A673 (cell line): ENCODE measurements at regions of chr1 and their contacts with region 1.

Region 1: DNA sequence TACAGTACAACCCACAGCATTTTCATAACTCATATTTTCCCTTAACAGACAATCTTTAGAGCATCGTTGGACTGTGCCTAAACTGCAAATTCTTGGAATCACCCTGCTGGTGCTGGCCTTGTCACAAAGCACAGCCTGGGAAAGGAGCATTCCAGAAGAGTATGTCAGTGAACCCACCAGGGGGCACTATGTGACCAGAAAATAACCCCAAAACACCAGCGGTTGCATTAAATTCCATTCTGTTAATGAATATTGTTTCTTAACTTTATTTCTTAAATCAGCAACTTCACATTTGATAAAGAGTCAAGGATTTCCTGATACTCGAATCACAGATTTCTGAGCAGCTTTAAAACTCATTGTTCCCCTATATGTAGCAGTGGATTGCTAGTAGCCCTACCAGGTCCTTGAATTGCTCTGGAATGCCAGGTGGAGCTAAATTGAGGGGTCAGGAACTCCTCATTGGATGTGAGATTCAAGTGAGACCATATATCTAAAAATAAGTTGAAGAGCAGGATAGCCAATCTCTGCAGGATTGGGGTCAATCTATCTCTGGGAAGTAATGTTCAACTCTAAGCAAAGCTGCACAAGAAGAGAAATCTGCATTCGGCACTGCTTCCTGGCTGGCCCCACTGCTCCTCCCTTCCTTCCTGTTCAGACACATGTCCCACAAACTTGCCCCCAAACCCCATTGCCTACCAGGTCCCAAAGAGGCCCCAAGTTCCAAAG is 12.7 kb upstream of the RAB4A start:
- DNase-seq: peak; percentile 80
- H3K4me3 ChIP-seq: no peak overlapping the region
- H3K27ac ChIP-seq: no peak overlapping the region
- H3K4me1 ChIP-seq: peaks cover 7% of the 10 kb centered on the region
- H3K27me3 ChIP-seq: no peaks in the 10 kb centered on the region
- CTCF ChIP-seq: peak; percentile 84

Region 2: GRCh38 chr1:228664399-228664914 is 593.7 kb before region 1 on chr1:
- CTCF ChIA-PET with region 1: interaction called, 5 read pairs
- POLR2A ChIA-PET with region 1: interaction called, 3 read pairs
- intact Hi-C with region 1: loop called (anchors 1 kb)
- DNase-seq: peak; percentile 83
- H3K4me3 ChIP-seq: no peak overlapping the region
- H3K27ac ChIP-seq: no peak overlapping the region
- H3K4me1 ChIP-seq: no peaks in the 10 kb centered on the region
- H3K27me3 ChIP-seq: no peaks in the 10 kb centered on the region
- CTCF ChIP-seq: peak; percentile 76

Region 3: DNA sequence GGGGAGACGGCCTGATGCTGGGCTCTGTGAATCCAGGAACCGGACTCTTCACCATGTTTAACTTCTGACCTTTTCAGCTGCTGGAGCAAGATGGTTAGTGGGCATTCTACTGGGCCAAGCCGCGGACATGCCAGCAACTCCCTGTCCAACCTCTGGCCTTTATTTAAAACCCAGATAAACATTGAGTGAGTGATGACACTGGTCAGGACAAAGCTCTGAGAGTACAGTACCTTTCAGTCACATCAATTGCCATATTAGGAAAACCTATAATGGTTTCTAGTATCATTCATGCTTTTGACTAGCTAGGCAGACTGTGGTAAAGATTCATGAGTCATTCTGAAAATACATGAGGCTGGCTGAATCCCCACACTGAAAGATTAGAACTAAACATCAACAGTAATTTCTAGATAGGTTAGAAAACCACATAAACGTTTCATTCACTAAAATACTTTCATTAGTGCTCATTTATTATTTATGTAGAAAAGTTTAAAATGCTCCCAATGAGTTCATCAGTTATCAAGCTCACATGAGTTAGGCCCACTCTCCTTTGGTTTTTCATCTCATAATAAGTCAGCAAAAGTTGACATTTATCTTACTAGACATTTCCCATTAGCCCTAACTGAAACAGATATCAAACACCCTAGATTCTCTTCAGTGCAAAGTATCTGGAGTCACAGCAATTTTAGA is 182.8 kb after region 1 on chr1:
- CTCF ChIA-PET with region 1: no interaction called
- POLR2A ChIA-PET with region 1: no interaction called
- intact Hi-C with region 1: no loop called
- DNase-seq: no peak
- H3K4me3 ChIP-seq: no peak overlapping the region
- H3K27ac ChIP-seq: no peak overlapping the region
- H3K4me1 ChIP-seq: no peaks in the 10 kb centered on the region
- H3K27me3 ChIP-seq: no peaks in the 10 kb centered on the region
- CTCF ChIP-seq: no peak

Region 4: DNA sequence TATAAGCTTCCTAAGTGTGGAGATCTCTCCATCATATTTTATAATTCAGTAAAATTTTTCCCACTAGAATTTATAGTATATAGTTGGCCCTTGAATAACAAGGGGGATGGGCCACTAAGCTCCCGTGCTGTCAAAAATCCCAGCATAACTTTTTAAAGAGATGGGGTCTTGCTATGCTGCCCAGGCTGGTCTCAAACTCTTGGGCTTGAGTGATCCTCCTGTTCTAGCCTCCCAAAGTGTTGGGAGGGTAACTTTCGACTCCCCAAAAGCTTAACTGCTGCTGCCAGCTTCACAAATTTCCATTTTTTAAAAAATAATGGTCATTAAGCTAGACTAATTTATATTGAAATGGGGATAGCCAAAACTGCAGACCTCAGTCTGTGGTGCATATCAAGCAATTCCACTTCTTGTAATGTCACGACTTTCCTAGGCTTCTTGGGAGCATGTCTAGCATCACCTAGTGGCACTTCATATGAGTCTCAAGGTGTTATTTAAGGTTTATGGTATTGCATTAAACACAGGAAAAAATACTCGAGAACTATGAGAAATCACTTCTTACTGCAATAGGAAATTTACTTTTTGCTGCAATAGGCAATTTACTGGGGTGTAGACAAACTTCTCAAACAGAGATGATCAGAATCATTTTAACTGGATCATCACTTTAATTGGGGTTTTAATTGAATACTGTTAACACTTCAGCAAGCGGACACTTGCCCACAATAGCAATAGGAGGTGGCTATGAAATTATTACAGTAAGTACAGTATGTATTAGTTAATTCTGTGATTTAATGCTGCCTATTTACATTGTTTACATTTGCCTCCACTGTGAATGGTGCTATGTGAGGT is 195.0 kb after region 1 on chr1:
- CTCF ChIA-PET with region 1: no interaction called
- POLR2A ChIA-PET with region 1: no interaction called
- intact Hi-C with region 1: loop called (anchors 1 kb)
- DNase-seq: peak; percentile 29
- H3K4me3 ChIP-seq: no peak overlapping the region
- H3K27ac ChIP-seq: no peak overlapping the region
- H3K4me1 ChIP-seq: no peaks in the 10 kb centered on the region
- H3K27me3 ChIP-seq: no peaks in the 10 kb centered on the region
- CTCF ChIP-seq: peak; percentile 55

Region 5: GRCh38 chr1:229479660-229480399 is 221.6 kb after region 1 on chr1:
- CTCF ChIA-PET with region 1: interaction called, 16 read pairs
- POLR2A ChIA-PET with region 1: no interaction called
- intact Hi-C with region 1: loop called (anchors 1 kb)
- DNase-seq: no peak
- H3K4me3 ChIP-seq: no peak overlapping the region
- H3K27ac ChIP-seq: no peak overlapping the region
- H3K4me1 ChIP-seq: no peaks in the 10 kb centered on the region
- H3K27me3 ChIP-seq: no peaks in the 10 kb centered on the region
- CTCF ChIP-seq: no peak

Region 6: GRCh38 chr1:229514578-229515275 is 256.5 kb after region 1 on chr1:
- CTCF ChIA-PET with region 1: interaction called, 5 read pairs
- POLR2A ChIA-PET with region 1: no interaction called
- intact Hi-C with region 1: loop called (anchors 1 kb)
- DNase-seq: peak; percentile 76
- H3K4me3 ChIP-seq: no peak overlapping the region
- H3K27ac ChIP-seq: no peak overlapping the region
- H3K4me1 ChIP-seq: peaks cover 4% of the 10 kb centered on the region
- H3K27me3 ChIP-seq: no peaks in the 10 kb centered on the region
- CTCF ChIP-seq: peak; percentile 91

Region 7: DNA sequence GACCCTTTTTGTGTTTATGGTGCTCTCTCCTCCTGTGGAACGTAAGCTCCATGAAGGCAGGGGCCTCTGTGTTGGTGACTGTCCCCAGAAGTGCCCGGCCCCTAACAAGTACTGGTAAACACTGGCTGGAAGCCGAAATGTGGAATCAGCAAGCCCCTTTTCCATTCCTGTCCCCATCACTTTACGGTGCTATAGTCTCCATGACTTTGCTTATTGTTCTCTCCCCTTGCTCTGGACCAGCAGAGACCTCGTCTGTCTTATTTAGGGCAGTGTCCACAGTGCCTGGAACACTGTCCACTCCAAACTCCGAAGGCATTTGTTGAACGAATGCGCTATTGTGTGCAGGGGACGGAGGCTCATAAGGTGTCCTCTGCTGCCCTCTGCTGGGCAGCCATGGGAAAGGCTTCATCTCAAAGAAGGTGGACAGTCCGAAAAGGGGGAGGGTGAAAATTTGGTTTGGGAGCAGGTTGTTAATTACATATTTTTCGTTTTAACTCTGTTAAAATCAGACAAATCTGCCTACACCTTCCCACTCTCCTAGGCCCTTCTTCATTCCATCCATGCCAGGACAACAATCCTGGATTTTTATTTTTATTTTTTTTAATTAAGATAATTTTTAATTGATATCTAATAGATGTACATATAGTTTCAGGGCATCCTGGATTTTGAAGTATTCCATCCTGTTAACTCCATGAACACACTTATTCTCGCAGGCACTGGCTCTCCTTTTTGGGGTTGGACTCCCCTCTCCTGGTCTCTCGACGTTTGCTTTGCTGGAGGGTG is 1052.4 kb after region 1 on chr1:
- CTCF ChIA-PET with region 1: interaction called, 3 read pairs
- POLR2A ChIA-PET with region 1: no interaction called
- intact Hi-C with region 1: loop called (anchors 5 kb)
- DNase-seq: peak; percentile 81
- H3K4me3 ChIP-seq: no peak overlapping the region
- H3K27ac ChIP-seq: no peak overlapping the region
- H3K4me1 ChIP-seq: peaks cover 16% of the 10 kb centered on the region
- H3K27me3 ChIP-seq: no peaks in the 10 kb centered on the region
- CTCF ChIP-seq: peak; percentile 97

Region 8: DNA sequence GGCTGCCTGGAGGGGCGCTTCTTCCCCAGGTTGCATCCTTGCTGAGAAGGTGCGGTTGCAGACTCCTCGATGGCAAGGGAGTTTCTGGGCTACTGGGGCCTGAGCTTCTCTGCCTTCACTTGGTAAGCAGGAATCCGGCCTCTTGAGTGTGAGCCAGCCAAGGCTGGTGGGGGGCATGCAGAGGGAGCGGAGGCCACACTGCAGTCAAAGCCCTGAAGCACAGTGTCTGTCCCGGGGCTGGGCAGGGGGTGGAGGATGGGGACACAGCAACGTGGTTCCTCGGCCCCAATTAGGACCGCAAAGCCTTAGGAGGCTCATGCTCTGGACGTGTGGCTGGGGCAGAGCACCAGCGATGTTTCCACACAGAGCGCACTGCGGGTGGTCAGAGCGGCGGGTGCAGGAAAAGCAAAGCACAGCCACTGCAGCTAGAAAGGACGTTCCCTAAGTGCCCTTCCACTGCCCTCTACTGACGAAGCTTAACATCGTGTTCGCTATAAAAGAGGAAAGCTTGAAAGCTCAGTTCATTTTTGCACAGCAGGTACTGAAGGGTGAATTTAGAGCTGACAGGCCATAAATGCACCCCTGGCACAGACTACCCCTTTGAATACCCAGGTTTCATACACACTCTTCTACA is 1323.4 kb after region 1 on chr1:
- CTCF ChIA-PET with region 1: no interaction called
- POLR2A ChIA-PET with region 1: no interaction called
- intact Hi-C with region 1: loop called (anchors 5 kb)
- DNase-seq: peak; percentile 40
- H3K4me3 ChIP-seq: no peak overlapping the region
- H3K27ac ChIP-seq: no peak overlapping the region
- H3K4me1 ChIP-seq: no peaks in the 10 kb centered on the region
- H3K27me3 ChIP-seq: peaks cover 8% of the 10 kb centered on the region
- CTCF ChIP-seq: peak; percentile 33